Endothelial cell of umbilical vein (primary cell): ENCODE measurements at regions of chr11 and their contacts with region 1.

Region 1: GRCh38 chr11:33996498-33997454 is 54.8 kb upstream of the CAPRIN1 start:
- DNase-seq: peak; percentile 75
- H3K4me3 ChIP-seq: no peak overlapping the region
- H3K27ac ChIP-seq: no peak overlapping the region
- H3K4me1 ChIP-seq: no peaks in the 10 kb centered on the region
- H3K27me3 ChIP-seq: peaks cover 20 to 27% of the 10 kb centered on the region in 2 experiments
- CTCF ChIP-seq: peak; percentile 63 to 77
- POLR2A ChIP-seq: no peak

Region 2: GRCh38 chr11:34028425-34028824 is 31.6 kb after region 1 on chr11:
- CTCF ChIA-PET with region 1: no interaction called
- POLR2A ChIA-PET with region 1: no interaction called
- dilution Hi-C with region 1: no loop called
- intact Hi-C with region 1: no loop called
- DNase-seq: no peak
- H3K4me3 ChIP-seq: no peak overlapping the region
- H3K27ac ChIP-seq: no peak overlapping the region
- H3K4me1 ChIP-seq: no peaks in the 10 kb centered on the region
- H3K27me3 ChIP-seq: peaks cover 2 to 5% of the 10 kb centered on the region in 2 experiments
- CTCF ChIP-seq: no peak
- POLR2A ChIP-seq: no peak

Region 3: DNA sequence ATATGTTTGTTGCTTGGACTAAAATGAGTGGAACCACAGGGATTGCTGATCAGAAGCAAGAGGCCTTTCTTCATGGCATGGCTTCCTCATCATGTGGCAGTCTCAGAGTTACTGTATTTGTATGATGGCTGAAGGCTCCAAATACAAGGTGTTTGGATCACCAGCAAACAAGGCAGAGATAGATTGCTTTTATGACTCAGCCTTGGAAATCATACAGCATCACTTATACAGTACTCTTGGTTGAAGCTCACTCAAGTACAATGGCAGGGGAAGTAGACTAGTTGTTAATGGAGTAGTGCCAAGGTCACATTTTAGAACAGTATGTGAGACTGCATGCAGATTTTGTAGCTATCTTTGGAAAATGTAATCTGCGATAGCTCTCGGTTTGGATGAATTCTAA is 71.3 kb after region 1 on chr11:
- CTCF ChIA-PET with region 1: interaction called, 36 read pairs
- POLR2A ChIA-PET with region 1: no interaction called
- dilution Hi-C with region 1: no loop called
- intact Hi-C with region 1: no loop called
- DNase-seq: peak; percentile 93
- H3K4me3 ChIP-seq: peak overlapping the region in 1 of 3 experiments; percentile 30
- H3K27ac ChIP-seq: peak overlapping the region; percentile 57
- H3K4me1 ChIP-seq: peaks cover 41% of the 10 kb centered on the region
- H3K27me3 ChIP-seq: no peaks in the 10 kb centered on the region
- CTCF ChIP-seq: no peak
- POLR2A ChIP-seq: no peak

Region 4: GRCh38 chr11:34075178-34075820 is 78.5 kb after region 1 on chr11:
- CTCF ChIA-PET with region 1: interaction called, 36 read pairs
- POLR2A ChIA-PET with region 1: no interaction called
- dilution Hi-C with region 1: no loop called
- intact Hi-C with region 1: loop called (anchors 1 kb)
- DNase-seq: peak; percentile 40
- H3K4me3 ChIP-seq: no peak overlapping the region
- H3K27ac ChIP-seq: peak overlapping the region; percentile 25
- H3K4me1 ChIP-seq: peaks cover 30% of the 10 kb centered on the region
- H3K27me3 ChIP-seq: no peaks in the 10 kb centered on the region
- CTCF ChIP-seq: no peak
- POLR2A ChIP-seq: no peak

Region 5: GRCh38 chr11:34105079-34105956 is 108.5 kb after region 1 on chr11 and contains the start of gene NAT10:
- CTCF ChIA-PET with region 1: interaction called, 11 read pairs
- POLR2A ChIA-PET with region 1: no interaction called
- dilution Hi-C with region 1: no loop called
- intact Hi-C with region 1: loop called (anchors 2 kb)
- DNase-seq: peak; percentile 99
- H3K4me3 ChIP-seq: peak within 1 kb of the TSS; percentile 27 to 79 (median 71)
- H3K27ac ChIP-seq: peak within 1 kb of the TSS; percentile 44
- H3K4me1 ChIP-seq: peaks cover 19% of the 10 kb centered on the region
- H3K27me3 ChIP-seq: no peaks in the 10 kb centered on the region
- CTCF ChIP-seq: peak in 1 of 2 donors; percentile 16
- POLR2A ChIP-seq: peak; percentile 99
- total RNA-seq, gene NAT10: 54.9 and 57.6 TPM in 2 replicates

Region 6: DNA sequence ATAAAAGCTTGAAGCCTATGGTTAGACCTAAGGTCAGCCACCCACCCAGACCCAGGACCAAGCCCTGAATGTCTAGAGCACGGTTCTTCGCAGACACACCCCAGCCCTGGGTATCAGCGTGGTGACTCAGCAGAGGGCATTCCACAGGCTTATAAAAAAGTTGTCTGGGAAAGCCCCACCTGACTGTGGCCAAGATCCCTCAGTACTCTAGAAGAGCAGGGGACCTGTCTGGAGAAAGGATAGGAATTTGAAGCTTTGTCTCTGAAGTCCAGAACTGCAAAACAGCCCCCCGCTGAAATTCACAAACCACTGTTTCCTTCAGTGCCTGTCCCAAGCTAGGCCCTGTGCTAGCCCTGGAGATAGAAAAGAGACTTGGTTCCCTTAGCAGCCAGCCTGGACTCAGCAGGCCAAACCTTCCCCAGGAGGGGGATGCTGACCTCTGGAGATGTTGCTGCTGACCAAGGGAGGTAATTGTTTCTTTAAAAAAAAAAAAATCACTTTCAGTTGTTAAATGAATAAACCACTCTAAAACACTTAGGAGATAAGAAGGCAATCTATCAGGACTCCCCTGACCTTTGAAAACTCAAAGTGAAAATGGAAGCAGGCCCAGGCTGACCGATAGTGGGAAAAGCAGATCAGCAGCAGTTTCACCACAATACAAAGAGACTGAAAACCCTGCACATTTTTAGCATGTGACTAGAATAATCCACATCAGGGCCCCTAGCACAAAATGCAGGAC is 247.1 kb after region 1 on chr11:
- CTCF ChIA-PET with region 1: no interaction called
- POLR2A ChIA-PET with region 1: no interaction called
- dilution Hi-C with region 1: no loop called
- intact Hi-C with region 1: no loop called
- DNase-seq: no peak
- H3K4me3 ChIP-seq: no peak overlapping the region
- H3K27ac ChIP-seq: no peak overlapping the region
- H3K4me1 ChIP-seq: no peaks in the 10 kb centered on the region
- H3K27me3 ChIP-seq: no peaks in the 10 kb centered on the region
- CTCF ChIP-seq: no peak
- POLR2A ChIP-seq: no peak